CD8-positive, alpha-beta T cell (primary cell): ENCODE measurements at regions of chr17 and their contacts with region 1.

Region 1: GRCh38 chr17:45325810-45326209 is 9.0 kb upstream of the MAP3K14 start:
- DNase-seq: no peak
- ATAC-seq: no peak
- H3K4me3 ChIP-seq: no peak overlapping the region
- H3K4me3 Mint-ChIP-seq: no peak overlapping the region
- H3K27ac ChIP-seq: no peak overlapping the region
- H3K27ac Mint-ChIP-seq: no peak overlapping the region
- H3K4me1 ChIP-seq: peaks cover 14% of the 10 kb centered on the region
- H3K4me1 Mint-ChIP-seq: peaks cover 20% of the 10 kb centered on the region
- H3K27me3 ChIP-seq: no peaks in the 10 kb centered on the region
- H3K27me3 Mint-ChIP-seq: no peaks in the 10 kb centered on the region
- CTCF ChIP-seq: no peak

Region 2: GRCh38 chr17:45293413-45294211 is 32.2 kb before region 1 on chr17:
- CTCF ChIA-PET with region 1: no interaction called
- POLR2A ChIA-PET with region 1: no interaction called
- intact Hi-C with region 1: loop called in 1 of 2 experiments (anchors 5 kb)
- DNase-seq: peak in 1 of 9 experiments; percentile 34
- ATAC-seq: no peak
- H3K4me3 ChIP-seq: no peak overlapping the region
- H3K4me3 Mint-ChIP-seq: no peak overlapping the region
- H3K27ac ChIP-seq: no peak overlapping the region
- H3K27ac Mint-ChIP-seq: peak overlapping the region; percentile 58
- H3K4me1 ChIP-seq: peaks cover 26% of the 10 kb centered on the region
- H3K4me1 Mint-ChIP-seq: peaks cover 71% of the 10 kb centered on the region
- H3K27me3 ChIP-seq: no peaks in the 10 kb centered on the region
- H3K27me3 Mint-ChIP-seq: no peaks in the 10 kb centered on the region
- CTCF ChIP-seq: no peak

Region 3: GRCh38 chr17:45351831-45352230 is 26.0 kb after region 1 on chr17:
- CTCF ChIA-PET with region 1: no interaction called
- POLR2A ChIA-PET with region 1: no interaction called
- intact Hi-C with region 1: no loop called
- DNase-seq: no peak
- ATAC-seq: no peak
- H3K4me3 ChIP-seq: no peak overlapping the region
- H3K4me3 Mint-ChIP-seq: no peak overlapping the region
- H3K27ac ChIP-seq: no peak overlapping the region
- H3K27ac Mint-ChIP-seq: no peak overlapping the region
- H3K4me1 ChIP-seq: no peaks in the 10 kb centered on the region
- H3K4me1 Mint-ChIP-seq: peaks cover 3% of the 10 kb centered on the region
- H3K27me3 ChIP-seq: no peaks in the 10 kb centered on the region
- H3K27me3 Mint-ChIP-seq: peaks cover 3% of the 10 kb centered on the region
- CTCF ChIP-seq: no peak

Region 4: GRCh38 chr17:45364531-45365390 is 39.0 kb after region 1 on chr17:
- CTCF ChIA-PET with region 1: no interaction called
- POLR2A ChIA-PET with region 1: no interaction called
- intact Hi-C with region 1: no loop called
- DNase-seq: no peak
- ATAC-seq: no peak
- H3K4me3 ChIP-seq: no peak overlapping the region
- H3K4me3 Mint-ChIP-seq: no peak overlapping the region
- H3K27ac ChIP-seq: no peak overlapping the region
- H3K27ac Mint-ChIP-seq: no peak overlapping the region
- H3K4me1 ChIP-seq: no peaks in the 10 kb centered on the region
- H3K4me1 Mint-ChIP-seq: no peaks in the 10 kb centered on the region
- H3K27me3 ChIP-seq: no peaks in the 10 kb centered on the region
- H3K27me3 Mint-ChIP-seq: peaks cover 18% of the 10 kb centered on the region
- CTCF ChIP-seq: no peak